Dorsolateral prefrontal cortex (tissue), 120 donors: ENCODE measurements at regions of chr16 and their contacts with region 1.

Region 1: GRCh38 chr16:49369651-49370611 is 3.7 kb upstream of the C16orf78 start:
- DNase-seq: no peak
- H3K4me3 ChIP-seq: no peak overlapping the region
- H3K27ac ChIP-seq: no peak overlapping the region
- H3K27me3 ChIP-seq: peaks cover 0 to 4% (median 0%) of the 10 kb centered on the region in 45 donors
- CTCF ChIP-seq: no peak

Region 2: DNA sequence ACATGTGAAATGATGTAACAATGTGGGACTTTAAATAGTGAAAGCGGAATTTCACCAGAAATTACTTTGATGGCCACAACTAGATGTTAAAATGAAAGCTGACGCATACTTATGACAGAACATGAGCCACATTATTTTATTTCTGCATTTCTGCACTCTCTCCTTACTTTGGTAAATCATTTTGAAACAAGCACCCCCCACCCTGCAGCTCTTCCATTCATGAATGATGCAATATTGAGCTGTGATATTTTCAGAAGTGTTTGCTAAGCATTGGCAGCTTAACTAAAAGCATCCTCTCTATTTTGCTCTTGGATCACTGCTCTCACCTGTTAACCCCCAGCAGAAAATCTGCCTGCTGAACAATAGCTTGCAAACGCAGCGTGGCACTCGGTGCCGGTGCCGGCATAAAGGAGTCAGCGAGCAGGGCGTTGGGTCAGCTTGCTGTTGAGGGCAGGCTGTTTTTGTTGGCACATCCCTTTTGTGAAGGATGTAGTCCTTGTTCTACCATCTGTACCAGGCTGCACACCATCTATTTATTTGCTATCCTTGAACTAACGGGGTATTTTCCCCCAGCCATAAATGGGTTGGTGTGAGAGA is 57.4 kb before region 1 on chr16:
- intact Hi-C with region 1: loop called in 1 of 2 experiments (anchors 10 kb)
- DNase-seq: peak in 1 of 10 donors; percentile 68
- H3K4me3 ChIP-seq: no peak overlapping the region
- H3K27ac ChIP-seq: peak overlapping the region in 1 of 59 donors; percentile 64
- H3K27me3 ChIP-seq: peaks cover 0 to 53% (median 13%) of the 10 kb centered on the region in 45 donors
- CTCF ChIP-seq: no peak